Activated CD4-positive, alpha-beta memory T cell treated with anti-CD3 and anti-CD28 coated beads for 36 hours (primary cell): ENCODE measurements at regions of chr10 and their contacts with region 1.

Region 1: DNA sequence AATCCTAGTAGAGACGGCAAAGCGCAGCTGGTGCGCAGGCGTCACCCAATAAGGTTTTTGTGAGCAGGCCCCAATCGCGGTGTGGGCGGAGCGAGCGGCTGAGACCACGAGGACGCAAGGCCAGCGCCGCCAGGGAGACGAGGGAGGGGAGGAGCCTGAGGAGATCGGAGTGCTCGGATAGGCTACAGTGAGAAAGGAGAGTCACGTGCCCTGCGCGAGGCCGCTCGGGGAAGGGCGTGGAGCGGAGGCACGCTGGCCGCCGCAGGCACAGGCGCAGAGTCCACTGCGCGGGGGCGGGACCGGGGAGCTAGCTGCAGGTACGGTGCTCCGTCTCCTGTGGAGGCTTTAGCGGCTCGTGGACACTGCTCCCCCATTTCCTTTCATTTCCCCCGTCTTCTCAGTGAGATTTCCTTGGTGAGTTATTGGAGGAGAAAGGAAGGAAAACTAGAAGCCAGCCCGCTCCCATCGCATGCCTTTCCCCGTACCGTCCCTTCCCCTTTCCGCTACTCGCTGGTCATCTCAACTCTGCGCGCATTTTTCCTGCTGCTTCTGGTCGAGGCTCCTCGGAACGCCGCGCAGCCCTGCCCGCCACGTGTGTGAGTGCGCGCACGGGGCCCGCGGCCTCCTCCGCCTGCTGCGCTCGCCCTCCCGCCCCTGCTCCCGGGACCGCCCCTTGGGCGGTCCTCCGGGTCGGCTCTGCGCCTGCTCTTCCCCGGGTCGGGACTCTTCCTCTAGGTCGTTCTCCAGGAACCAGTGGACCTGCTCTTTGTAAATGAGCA is at the start of gene THNSL1:
- DNase-seq: peak; percentile 99
- H3K4me3 Mint-ChIP-seq: peak within 1 kb of the TSS; percentile 94
- H3K27ac Mint-ChIP-seq: peak within 1 kb of the TSS; percentile 97
- H3K4me1 Mint-ChIP-seq: peaks cover 19% of the 10 kb centered on the region
- H3K27me3 Mint-ChIP-seq: no peaks in the 10 kb centered on the region
- total RNA-seq, gene THNSL1: 6.0 to 6.2 TPM

Region 2: DNA sequence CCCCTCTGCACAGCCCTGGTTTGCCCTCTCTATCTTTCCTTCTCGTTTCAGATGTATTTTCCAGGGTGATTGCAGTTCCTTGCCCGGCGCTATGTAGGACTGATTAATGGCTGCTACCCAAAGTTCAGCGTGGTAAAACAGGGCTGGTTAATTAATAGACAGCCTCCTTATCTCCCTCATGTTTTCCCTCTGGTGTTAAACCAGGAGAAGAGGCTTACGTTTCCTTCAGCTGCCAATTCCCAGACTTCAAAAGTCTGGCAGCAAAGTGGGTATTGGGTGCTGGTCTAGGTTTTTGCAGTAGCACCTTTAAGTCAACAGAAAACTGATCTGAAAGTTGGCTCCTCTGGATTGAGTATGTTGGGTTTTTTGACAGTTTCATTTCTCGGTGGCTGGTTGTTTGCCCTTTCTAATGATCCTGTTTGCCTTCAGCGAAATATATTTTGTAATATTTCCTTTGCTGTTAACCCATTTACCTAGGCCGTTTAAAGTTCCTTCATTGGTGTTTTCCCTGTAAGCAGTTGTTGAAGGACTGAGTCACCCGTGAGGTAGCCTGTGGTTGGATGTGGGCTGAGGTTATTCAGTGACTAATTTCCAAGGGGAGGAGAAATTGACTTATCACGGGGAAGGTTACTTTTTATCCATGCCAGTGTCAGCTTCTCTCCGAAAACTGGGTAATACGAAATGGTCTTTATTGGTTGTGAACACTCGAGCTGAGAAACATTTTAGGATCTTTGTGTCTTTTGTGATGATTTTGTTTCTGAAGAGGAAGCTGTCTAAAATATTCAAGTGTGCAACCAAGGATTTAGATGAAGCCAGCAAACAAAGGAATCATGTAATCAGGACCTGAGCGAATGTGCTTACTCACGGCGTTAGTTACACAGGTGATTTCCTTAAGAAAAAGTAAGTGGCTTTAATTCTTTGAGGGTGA is 550.4 kb before region 1 on chr10:
- CTCF ChIA-PET with region 1: no interaction called
- POLR2A ChIA-PET with region 1: no interaction called
- intact Hi-C with region 1: loop called (anchors 5 kb)
- DNase-seq: peak; percentile 84
- H3K4me3 Mint-ChIP-seq: peak overlapping the region; percentile 44
- H3K27ac Mint-ChIP-seq: peak overlapping the region; percentile 53
- H3K4me1 Mint-ChIP-seq: peaks cover 42% of the 10 kb centered on the region
- H3K27me3 Mint-ChIP-seq: peaks cover 21% of the 10 kb centered on the region

Region 3: DNA sequence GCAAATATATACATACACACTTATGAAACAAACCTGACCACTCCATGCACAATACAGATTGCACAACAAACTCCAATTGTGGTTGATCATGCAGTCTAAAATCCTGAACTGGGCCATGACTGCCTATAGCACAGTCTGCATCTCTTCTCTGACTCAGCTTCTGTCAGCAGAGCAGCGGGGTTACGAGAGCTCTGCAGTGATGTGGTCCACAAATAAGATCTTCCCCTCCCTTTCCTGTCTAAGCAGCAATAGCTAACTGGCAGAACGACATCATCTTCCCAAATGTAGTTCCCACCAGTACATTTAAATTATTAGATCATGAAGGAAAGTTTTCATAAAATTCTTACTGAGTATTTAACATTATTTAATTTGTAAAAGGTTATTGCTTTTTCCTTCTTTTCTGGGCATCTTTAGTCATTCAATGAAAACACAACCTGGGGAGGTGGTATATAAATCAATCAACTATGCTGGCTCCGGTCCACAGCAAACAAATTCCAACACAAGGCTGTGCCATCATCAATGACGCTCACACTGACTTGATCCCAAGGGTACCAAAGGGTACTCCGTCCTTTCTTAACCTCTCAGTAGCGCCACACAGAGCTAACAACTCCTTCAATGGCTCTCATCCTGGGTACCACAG is 310.0 kb before region 1 on chr10:
- CTCF ChIA-PET with region 1: no interaction called
- POLR2A ChIA-PET with region 1: no interaction called
- intact Hi-C with region 1: loop called (anchors 5 kb)
- DNase-seq: peak; percentile 62
- H3K4me3 Mint-ChIP-seq: no peak overlapping the region
- H3K27ac Mint-ChIP-seq: no peak overlapping the region
- H3K4me1 Mint-ChIP-seq: peaks cover 10% of the 10 kb centered on the region
- H3K27me3 Mint-ChIP-seq: peaks cover 1% of the 10 kb centered on the region

Region 4: DNA sequence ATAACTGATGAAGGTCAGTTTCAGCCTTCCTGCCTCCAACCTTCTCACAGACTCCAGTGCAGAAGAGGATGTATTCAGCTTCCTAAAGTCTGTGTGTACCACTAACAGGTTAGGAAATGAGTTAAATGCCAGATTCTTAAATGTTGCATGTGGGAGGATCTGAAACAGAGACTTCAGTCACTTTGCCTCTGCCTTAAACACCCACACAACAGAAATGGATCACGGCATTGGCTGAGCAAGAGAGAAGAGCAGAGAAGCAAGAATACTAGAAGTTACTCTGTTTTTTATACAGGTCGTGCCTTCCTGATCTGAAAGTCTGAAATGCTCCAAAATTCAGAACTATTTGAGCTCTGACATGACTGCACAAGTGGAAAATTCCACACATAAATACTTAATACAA is 194.0 kb before region 1 on chr10:
- CTCF ChIA-PET with region 1: no interaction called
- POLR2A ChIA-PET with region 1: no interaction called
- intact Hi-C with region 1: loop called (anchors 2 kb)
- DNase-seq: peak; percentile 52
- H3K4me3 Mint-ChIP-seq: no peak overlapping the region
- H3K27ac Mint-ChIP-seq: no peak overlapping the region
- H3K4me1 Mint-ChIP-seq: peaks cover 36% of the 10 kb centered on the region
- H3K27me3 Mint-ChIP-seq: no peaks in the 10 kb centered on the region

Region 5: DNA sequence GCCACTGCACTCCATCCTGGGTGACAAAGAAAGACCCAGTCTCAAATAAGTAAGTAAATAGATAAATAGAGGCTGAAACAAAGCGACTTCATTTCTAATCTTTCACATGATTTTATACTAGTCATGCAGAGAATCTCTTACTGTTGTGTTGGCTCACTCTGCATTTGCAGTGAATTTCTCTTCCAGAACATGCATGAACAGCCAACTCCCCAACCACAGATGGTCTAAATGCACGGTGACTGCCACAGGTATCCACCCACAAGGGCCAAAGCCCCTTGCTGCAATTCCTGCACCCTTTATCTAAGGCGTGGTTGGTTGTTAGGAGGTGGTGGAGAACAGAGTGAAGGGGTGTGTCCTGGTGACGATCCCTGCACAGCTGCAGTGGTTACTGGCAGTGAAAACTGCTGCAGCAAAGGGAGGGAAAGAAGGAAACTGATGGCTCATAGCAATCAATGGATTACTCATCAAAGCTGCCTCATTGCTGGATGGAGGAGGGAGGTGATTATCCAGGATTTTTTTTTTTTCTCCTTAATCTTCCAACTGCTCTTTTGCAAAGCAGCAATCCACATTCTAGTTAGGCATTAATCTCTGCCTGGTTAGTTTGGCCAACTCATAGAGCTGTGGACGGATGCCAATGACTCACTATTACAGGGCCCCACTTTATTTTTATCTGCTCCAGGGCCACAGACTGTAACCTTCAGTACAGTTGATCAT is 114.7 kb before region 1 on chr10:
- CTCF ChIA-PET with region 1: no interaction called
- POLR2A ChIA-PET with region 1: no interaction called
- intact Hi-C with region 1: loop called (anchors 5 kb)
- DNase-seq: peak; percentile 47
- H3K4me3 Mint-ChIP-seq: no peak overlapping the region
- H3K27ac Mint-ChIP-seq: peak overlapping the region; percentile 25
- H3K4me1 Mint-ChIP-seq: peaks cover 47% of the 10 kb centered on the region
- H3K27me3 Mint-ChIP-seq: no peaks in the 10 kb centered on the region

Region 6: GRCh38 chr10:25059764-25060389 is 43.3 kb after region 1 on chr10:
- CTCF ChIA-PET with region 1: no interaction called
- POLR2A ChIA-PET with region 1: no interaction called
- intact Hi-C with region 1: loop called (anchors 1 kb)
- DNase-seq: no peak
- H3K4me3 Mint-ChIP-seq: no peak overlapping the region
- H3K27ac Mint-ChIP-seq: no peak overlapping the region
- H3K4me1 Mint-ChIP-seq: peaks cover 20% of the 10 kb centered on the region
- H3K27me3 Mint-ChIP-seq: no peaks in the 10 kb centered on the region